Astrocyte of the cerebellum (primary cell): ENCODE measurements at regions of chr4 and their contacts with region 1.

Region 1: GRCh38 chr4:185071236-185071811 is 53.0 kb downstream of the HELT start:
- DNase-seq: no peak
- H3K4me3 ChIP-seq: no peak overlapping the region
- CTCF ChIP-seq: no peak

Region 2: DNA sequence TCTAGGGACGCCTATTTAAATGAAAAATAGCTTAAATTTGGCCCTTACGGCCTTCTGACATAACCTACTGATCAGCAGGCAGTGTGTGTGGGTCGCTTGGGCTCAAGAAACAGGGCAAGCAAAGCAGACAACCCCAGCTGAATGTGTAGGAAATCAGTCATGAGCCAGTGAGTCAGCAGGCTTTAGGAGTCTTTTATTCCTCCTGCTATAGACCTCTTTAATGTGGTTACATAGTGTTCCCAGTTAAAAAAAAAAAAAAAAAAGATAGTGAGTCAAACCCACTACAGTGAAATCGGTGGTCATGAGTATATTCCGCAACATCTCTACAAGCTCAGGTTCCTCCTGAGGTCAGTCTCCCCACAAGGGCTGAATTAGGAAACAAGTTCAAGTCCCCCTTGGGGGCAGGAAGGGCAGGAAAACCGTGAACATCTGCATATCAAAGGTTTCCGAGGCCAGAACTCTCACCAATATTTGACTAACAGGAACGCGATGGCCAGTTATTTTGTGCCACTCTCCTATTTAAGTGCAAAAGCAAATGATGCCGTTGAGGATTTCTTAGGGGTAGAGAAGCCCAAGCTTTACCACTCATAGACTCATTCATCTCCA is 278.3 kb before region 1 on chr4:
- in situ Hi-C with region 1: no loop called
- DNase-seq: peak; percentile 91
- H3K4me3 ChIP-seq: no peak overlapping the region
- CTCF ChIP-seq: no peak

Region 3: DNA sequence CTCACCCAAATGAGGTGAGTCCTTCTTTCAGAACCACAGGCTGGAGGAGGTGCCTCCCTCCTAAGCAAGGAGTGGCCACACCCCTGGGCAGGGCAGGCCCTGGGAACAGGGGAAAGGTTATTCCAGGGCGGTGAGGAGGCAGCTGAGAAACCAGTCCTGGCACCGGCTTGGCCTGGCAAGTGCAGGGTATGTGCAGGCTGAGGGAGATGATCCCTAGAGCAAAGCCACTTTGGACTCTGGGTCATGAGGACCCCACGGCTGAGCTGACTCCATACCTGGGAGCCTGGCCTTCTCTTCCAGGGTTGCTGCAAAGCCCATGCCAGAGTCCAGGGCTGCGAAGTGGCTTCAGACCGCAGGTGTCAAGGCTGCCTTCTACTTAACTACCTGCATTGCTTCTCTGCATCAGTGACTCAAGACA is 102.5 kb before region 1 on chr4:
- in situ Hi-C with region 1: no loop called
- DNase-seq: no peak
- H3K4me3 ChIP-seq: no peak overlapping the region
- CTCF ChIP-seq: no peak

Region 4: GRCh38 chr4:185112104-185112503 is 40.8 kb after region 1 on chr4:
- in situ Hi-C with region 1: no loop called
- DNase-seq: peak; percentile 86
- H3K4me3 ChIP-seq: no peak overlapping the region
- CTCF ChIP-seq: no peak

Region 5: DNA sequence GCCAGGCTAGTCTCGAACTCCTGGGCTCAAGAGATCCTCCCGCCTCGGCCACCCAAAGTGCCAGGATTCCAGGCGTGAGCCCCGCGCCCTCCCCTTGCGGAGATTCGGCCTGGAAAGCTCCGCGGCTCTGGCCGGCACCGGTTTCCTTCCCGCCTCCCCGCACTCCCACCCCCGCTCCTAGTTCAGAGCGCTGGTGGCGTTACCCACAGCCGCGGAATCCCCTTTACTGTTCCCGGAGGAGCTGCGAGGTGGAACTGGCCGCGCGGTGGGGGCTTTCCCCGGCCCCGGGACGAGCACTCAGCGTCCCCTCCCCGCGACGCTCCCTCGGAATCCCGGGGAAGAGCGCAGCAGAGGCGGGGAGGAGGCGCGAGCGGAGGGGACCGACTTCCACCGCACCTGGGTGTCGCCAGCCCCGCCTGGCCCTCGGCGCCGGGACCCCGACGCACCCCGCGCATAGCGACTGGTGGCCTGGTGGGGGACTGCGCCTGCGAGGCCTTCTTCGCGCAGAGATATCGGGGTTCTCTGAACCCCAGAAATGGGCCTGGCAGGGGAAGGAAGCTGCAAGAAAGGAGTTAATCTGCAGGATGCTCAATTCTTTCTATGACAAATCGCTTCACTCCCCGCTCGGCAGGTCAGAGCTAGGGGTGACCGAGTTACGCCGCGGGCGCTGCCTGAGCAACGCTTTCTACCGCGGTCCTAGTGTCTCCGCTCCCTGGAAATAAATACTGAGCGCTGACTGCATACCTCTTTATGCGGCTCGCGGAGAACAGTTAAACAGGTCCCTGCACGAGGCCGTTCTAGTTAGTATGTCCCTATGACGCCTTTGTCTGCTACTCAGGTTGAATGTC is 57.2 kb after region 1 on chr4:
- in situ Hi-C with region 1: no loop called
- DNase-seq: no peak
- H3K4me3 ChIP-seq: peak overlapping the region; percentile 57
- CTCF ChIP-seq: no peak

Region 6: DNA sequence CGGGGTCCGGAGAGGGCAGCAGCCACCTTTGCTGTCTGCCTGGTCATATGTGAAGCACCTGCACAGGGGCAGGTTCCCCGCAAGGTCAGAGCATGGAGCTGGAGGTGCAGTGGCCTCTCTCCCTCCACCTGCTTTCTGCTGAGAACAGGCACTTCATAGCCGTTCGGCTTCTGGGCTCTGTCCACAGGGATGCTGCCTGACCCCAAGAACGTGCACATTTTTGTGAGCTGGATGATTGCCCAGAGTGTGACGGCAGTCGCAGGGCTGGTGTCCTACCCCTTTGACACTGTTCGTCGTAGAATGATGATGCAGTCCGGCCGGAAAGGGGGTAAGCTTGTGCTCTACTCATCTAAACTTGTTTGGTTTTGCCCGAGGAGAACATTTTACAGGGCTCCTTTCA is 74.2 kb after region 1 on chr4:
- in situ Hi-C with region 1: loop called (anchors 5 kb)
- DNase-seq: no peak
- H3K4me3 ChIP-seq: no peak overlapping the region
- CTCF ChIP-seq: no peak